Activated CD4-positive, alpha-beta T cell treated with anti-CD3 and anti-CD28 coated beads for 36 hours (primary cell): ENCODE measurements at regions of chr1 and their contacts with region 1.

Region 1: DNA sequence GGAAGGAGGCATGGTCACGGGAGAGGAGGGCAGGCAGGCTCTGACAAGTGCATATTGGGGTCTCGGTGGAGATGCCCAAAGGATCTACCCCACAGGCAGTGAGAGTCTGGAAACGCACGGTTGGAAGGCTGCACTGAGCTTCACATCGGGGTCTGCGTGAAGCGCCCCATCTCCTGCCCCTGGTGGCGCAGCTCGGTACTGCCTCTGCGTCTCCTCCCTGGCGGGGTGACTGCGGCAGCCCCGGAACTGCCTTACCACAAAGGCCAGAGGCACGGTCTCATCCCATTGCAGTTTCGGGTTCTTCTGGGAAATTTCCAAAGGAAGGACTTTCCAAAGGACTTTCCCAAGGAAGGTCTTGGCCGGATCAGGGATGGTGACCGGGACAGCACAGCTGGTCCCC is 69.2 kb upstream of the AJAP1 start:
- DNase-seq: peak; percentile 73
- ATAC-seq: peak; percentile 70
- H3K4me3 Mint-ChIP-seq: no peak overlapping the region
- H3K27ac Mint-ChIP-seq: no peak overlapping the region
- H3K4me1 Mint-ChIP-seq: no peaks in the 10 kb centered on the region
- H3K27me3 Mint-ChIP-seq: peaks cover 34% of the 10 kb centered on the region

Region 2: DNA sequence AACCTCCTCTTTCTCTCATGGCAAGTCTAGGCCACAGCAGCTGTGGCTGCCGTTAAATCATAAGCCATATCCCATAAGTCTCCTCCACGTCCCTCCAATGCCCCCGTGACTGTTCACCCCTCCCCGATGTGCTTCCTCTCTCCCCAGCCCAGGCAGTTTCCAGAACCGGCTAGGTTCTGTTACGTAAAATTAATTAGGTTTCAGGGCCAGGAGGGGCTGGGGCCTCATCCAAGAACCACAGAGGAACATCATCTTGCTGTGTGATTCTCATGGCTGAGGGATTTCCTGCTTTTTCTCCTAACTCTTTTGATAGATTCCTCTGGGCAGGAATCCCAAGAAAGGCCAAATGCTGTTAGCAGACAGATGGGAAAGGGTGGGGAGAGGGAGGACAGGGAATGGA is 72.6 kb before region 1 on chr1:
- CTCF ChIA-PET with region 1: no interaction called
- POLR2A ChIA-PET with region 1: no interaction called
- intact Hi-C with region 1: no loop called
- DNase-seq: no peak
- ATAC-seq: no peak
- H3K4me3 Mint-ChIP-seq: no peak overlapping the region
- H3K27ac Mint-ChIP-seq: no peak overlapping the region
- H3K4me1 Mint-ChIP-seq: no peaks in the 10 kb centered on the region
- H3K27me3 Mint-ChIP-seq: peaks cover 13% of the 10 kb centered on the region

Region 3: GRCh38 chr1:4571263-4571662 is 14.0 kb before region 1 on chr1:
- CTCF ChIA-PET with region 1: interaction called, 16 read pairs
- POLR2A ChIA-PET with region 1: no interaction called
- intact Hi-C with region 1: no loop called
- DNase-seq: no peak
- ATAC-seq: no peak
- H3K4me3 Mint-ChIP-seq: no peak overlapping the region
- H3K27ac Mint-ChIP-seq: no peak overlapping the region
- H3K4me1 Mint-ChIP-seq: no peaks in the 10 kb centered on the region
- H3K27me3 Mint-ChIP-seq: peaks cover 14% of the 10 kb centered on the region